Activated naive CD4-positive, alpha-beta T cell treated with anti-CD3 and anti-CD28 coated beads for 36 hours (primary cell): ENCODE measurements at regions of chr4 and their contacts with region 1.

Region 1: GRCh38 chr4:55345980-55346850 is at the start of gene SRD5A3:
- DNase-seq: peak; percentile 80
- H3K4me3 Mint-ChIP-seq: peak within 1 kb of the TSS; percentile 87
- H3K27ac Mint-ChIP-seq: peak within 1 kb of the TSS; percentile 90
- H3K4me1 Mint-ChIP-seq: peaks cover 20% of the 10 kb centered on the region
- H3K27me3 Mint-ChIP-seq: no peaks in the 10 kb centered on the region
- total RNA-seq, gene SRD5A3: 21.7 to 22.3 TPM

Region 2: GRCh38 chr4:55321707-55322264 is 24.4 kb before region 1 on chr4:
- CTCF ChIA-PET with region 1: interaction called, 22 read pairs
- intact Hi-C with region 1: no loop called
- DNase-seq: peak; percentile 93
- H3K4me3 Mint-ChIP-seq: no peak overlapping the region
- H3K27ac Mint-ChIP-seq: no peak overlapping the region
- H3K4me1 Mint-ChIP-seq: peaks cover 52% of the 10 kb centered on the region
- H3K27me3 Mint-ChIP-seq: no peaks in the 10 kb centered on the region

Region 3: DNA sequence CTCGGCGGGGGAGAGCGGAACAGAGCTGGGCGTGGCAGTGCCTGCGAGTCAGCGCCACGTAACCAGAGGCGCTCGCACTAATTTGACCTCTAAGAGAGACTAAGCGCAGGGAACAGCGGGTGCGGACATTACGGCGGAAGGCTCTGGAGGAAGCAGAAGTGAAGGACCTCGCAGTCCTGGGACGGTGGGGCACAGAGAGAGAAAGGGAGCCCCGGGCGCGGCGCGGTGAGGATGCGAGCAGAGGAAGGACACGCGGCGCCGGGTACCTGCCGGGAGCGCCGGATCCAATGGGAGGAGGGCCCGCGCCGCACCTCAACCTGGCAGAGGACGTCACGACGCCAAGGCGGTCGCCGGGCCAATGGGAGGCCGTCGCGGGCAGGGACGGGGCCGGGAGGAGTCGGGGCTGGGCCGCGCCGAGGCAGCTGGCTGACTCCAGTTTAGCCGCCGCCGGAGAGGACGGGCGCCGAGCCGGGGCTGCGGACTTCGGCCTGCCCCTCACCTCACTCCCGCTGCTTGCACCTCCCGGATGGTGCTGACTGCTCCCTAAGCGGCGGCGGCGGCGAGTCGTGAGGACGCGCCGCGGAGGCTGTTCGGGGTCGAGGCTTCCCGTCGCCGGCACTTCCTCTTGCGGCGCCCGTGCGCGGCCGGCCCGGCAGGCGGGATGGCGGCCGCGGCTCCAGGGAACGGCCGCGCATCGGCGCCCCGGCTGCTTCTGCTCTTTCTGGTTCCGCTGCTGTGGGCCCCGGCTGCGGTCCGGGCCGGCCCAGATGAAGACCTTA is 49.5 kb after region 1 on chr4 and contains the start of gene TMEM165:
- CTCF ChIA-PET with region 1: interaction called, 17 read pairs
- intact Hi-C with region 1: loop called (anchors 1 kb)
- DNase-seq: peak; percentile 92
- H3K4me3 Mint-ChIP-seq: peak within 1 kb of the TSS; percentile 96
- H3K27ac Mint-ChIP-seq: peak within 1 kb of the TSS; percentile 89
- H3K4me1 Mint-ChIP-seq: peaks cover 39% of the 10 kb centered on the region
- H3K27me3 Mint-ChIP-seq: no peaks in the 10 kb centered on the region
- total RNA-seq, gene TMEM165: 39.1 to 40.6 TPM

Region 4: DNA sequence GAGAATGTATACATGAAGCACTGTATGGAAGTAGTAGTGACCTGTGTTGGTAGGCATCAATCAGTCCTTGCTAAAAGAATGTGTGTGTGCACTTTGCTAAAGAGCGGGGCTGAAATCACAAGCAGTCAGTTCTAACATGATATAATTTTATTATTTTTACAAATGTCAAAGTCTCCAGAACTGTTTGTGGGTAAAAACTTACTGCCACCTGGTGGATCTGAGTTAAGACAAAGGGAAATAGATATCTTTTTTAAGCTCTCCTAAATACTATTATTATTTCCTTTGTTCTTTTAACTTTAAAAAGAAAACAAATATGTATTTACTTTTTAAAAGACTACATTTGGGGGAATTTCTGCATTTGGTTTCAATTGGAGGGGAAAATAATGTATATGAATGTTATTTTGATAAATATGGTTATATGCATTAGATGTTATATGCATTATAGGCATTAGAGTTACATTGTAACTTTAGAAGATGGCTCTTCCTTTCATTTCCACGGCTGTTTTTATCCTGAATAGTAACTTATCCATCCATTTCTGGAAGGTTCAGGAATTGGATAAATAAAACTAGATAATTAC is 208.3 kb after region 1 on chr4:
- CTCF ChIA-PET with region 1: interaction called, 3 read pairs
- intact Hi-C with region 1: loop called (anchors 1 kb)
- DNase-seq: no peak
- H3K4me3 Mint-ChIP-seq: no peak overlapping the region
- H3K27ac Mint-ChIP-seq: no peak overlapping the region
- H3K4me1 Mint-ChIP-seq: peaks cover 12% of the 10 kb centered on the region
- H3K27me3 Mint-ChIP-seq: peaks cover 12% of the 10 kb centered on the region

Region 5: DNA sequence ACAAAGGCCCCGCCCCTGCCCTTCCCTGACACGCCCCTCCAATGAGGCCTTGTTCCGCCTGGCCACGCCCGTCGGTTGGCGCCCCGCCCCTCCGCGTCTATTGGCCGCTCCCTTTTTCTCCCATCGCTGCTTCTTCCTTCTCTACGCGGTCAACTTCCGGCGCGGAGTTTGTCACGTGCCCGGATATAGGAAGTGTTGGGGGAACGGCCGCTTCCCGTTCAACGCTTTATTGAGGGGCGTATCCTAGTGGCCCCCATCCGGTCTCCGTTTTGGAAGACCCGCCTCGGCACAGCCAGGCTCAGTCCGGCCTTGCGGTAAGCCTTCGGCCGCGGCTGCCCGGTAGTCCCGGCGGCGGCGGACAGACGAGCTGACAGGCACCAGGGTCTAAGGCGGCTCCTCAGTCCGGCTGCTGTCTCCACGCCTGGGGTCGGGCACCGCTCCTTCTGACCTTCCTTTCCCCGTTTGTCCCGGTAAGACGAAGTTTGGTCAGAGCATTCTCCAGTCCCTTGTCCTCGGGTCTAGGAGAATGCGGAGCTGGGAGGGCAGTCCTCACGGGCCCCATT is 507.4 kb after region 1 on chr4 and contains the start of gene EXOC1:
- CTCF ChIA-PET with region 1: no interaction called
- intact Hi-C with region 1: loop called (anchors 2 kb)
- DNase-seq: peak; percentile 99
- H3K4me3 Mint-ChIP-seq: peak within 1 kb of the TSS; percentile 32
- H3K27ac Mint-ChIP-seq: peak within 1 kb of the TSS; percentile 86
- H3K4me1 Mint-ChIP-seq: peaks cover 28% of the 10 kb centered on the region
- H3K27me3 Mint-ChIP-seq: no peaks in the 10 kb centered on the region
- total RNA-seq, gene EXOC1: 18.7 to 21.9 TPM